ENCODE measurements at regions of chr22 and their contacts with region 1.

Region 1: GRCh38 chr22:50012716-50013181 is at the start of gene IL17REL:
- DNase-seq: no peak
- ATAC-seq: no peak
- H3K4me3 Mint-ChIP-seq: peak within 1 kb of the TSS; percentile 71
- H3K27ac Mint-ChIP-seq: peak within 1 kb of the TSS; percentile 68
- H3K4me1 Mint-ChIP-seq: peaks cover 49% of the 10 kb centered on the region
- H3K27me3 Mint-ChIP-seq: no peaks in the 10 kb centered on the region
- CTCF ChIP-seq: no peak
- total RNA-seq, gene IL17REL: 0.15 and 0.31 TPM in 2 replicates

Region 2: DNA sequence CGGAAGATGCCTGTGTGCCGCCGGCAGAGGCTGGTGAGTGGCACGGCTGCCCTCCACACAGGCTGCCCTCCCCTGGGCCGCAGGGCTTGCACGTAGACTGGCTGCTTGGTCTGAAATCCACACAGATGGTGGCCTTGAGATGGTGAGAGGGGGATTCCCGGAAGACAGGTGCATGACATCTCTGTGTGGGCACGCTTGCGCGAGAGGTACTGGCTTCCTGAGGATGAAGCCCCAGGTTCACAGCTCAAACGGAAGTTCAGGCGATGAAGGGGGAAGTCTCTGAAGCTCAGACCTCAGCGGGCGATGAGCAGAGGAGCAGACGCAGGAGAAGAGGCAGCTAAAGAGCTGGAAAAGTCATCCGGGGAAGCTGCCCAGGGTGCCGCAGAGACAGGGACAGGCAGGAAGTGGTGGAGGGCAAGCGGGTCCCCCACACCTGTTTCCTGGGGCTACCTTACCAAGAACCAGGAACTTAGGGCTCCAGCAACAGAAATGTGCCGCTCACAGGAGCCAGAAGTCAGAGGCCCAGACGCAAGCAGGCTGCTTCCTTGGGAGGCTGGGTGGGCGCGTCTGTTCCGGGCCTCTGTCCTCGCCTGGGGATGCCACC is 87.1 kb before region 1 on chr22:
- CTCF ChIA-PET with region 1: interaction called, 3 read pairs
- POLR2A ChIA-PET with region 1: interaction called, 16 read pairs
- intact Hi-C with region 1: loop called (anchors 5 kb)
- DNase-seq: peak; percentile 75
- ATAC-seq: peak; percentile 76
- H3K4me3 Mint-ChIP-seq: peak overlapping the region; percentile 81
- H3K27ac Mint-ChIP-seq: peak overlapping the region; percentile 98
- H3K4me1 Mint-ChIP-seq: peaks cover 58% of the 10 kb centered on the region
- H3K27me3 Mint-ChIP-seq: no peaks in the 10 kb centered on the region
- CTCF ChIP-seq: no peak

Region 3: GRCh38 chr22:49970528-49971231 is 42.1 kb before region 1 on chr22:
- CTCF ChIA-PET with region 1: no interaction called
- POLR2A ChIA-PET with region 1: interaction called, 11 read pairs
- intact Hi-C with region 1: no loop called
- DNase-seq: peak; percentile 81
- ATAC-seq: peak; percentile 89
- H3K4me3 Mint-ChIP-seq: peak overlapping the region; percentile 80
- H3K27ac Mint-ChIP-seq: peak overlapping the region; percentile 85
- H3K4me1 Mint-ChIP-seq: peaks cover 38% of the 10 kb centered on the region
- H3K27me3 Mint-ChIP-seq: no peaks in the 10 kb centered on the region
- CTCF ChIP-seq: no peak

Region 4: DNA sequence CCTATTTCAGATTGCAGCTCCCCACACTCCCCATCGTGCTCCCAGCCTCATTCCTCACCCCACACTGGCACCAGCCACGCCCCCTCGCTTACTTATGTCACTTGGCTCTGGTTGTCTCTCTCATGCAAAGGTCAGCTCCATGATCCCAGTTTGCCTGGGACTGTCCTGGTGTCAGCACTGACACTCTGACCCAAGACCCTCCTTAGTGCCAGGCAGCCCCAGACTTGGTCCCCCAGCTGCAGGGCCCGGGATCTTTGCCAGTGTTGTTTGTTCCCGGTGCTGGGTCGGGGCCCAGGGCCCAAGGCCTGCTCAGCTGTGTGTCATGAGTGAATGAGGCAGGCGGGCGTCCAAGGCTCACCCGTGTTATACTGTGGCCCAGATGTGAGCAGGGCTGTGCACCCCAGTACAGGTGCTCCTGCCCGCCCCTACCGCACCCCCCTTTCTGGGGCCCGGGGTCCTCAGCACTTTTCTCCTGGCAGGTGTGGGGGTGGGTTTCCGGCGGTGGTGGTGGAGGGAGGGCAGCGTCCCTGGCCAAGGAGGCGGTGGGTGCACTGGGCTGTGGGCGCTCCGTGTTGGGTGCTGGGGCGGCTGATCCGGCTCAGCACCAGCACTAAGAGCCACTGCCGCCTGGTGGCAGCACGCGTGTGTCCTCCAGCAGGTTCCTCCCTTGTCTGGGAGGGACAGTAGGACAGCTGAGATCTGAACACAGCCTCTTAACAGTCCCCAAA is 19.7 kb before region 1 on chr22:
- CTCF ChIA-PET with region 1: interaction called, 3 read pairs
- POLR2A ChIA-PET with region 1: no interaction called
- intact Hi-C with region 1: loop called (anchors 2 kb)
- DNase-seq: peak; percentile 61
- ATAC-seq: peak; percentile 98
- H3K4me3 Mint-ChIP-seq: peak overlapping the region; percentile 41
- H3K27ac Mint-ChIP-seq: peak overlapping the region; percentile 54
- H3K4me1 Mint-ChIP-seq: peaks cover 13% of the 10 kb centered on the region
- H3K27me3 Mint-ChIP-seq: no peaks in the 10 kb centered on the region
- CTCF ChIP-seq: no peak

Region 5: GRCh38 chr22:50200461-50201190 is 187.9 kb after region 1 on chr22 and contains the start of gene SELENOO:
- CTCF ChIA-PET with region 1: no interaction called
- POLR2A ChIA-PET with region 1: no interaction called
- intact Hi-C with region 1: loop called (anchors 10 kb)
- DNase-seq: peak; percentile 88
- ATAC-seq: peak; percentile 93
- H3K4me3 Mint-ChIP-seq: peak within 1 kb of the TSS; percentile 85
- H3K27ac Mint-ChIP-seq: peak within 1 kb of the TSS; percentile 35
- H3K4me1 Mint-ChIP-seq: peaks cover 26% of the 10 kb centered on the region
- H3K27me3 Mint-ChIP-seq: no peaks in the 10 kb centered on the region
- CTCF ChIP-seq: no peak
- total RNA-seq, gene SELENOO: 33.9 and 39.0 TPM in 2 replicates

Region 6: GRCh38 chr22:50517495-50518260 is 504.9 kb after region 1 on chr22:
- CTCF ChIA-PET with region 1: no interaction called
- POLR2A ChIA-PET with region 1: no interaction called
- intact Hi-C with region 1: no loop called
- DNase-seq: no peak
- ATAC-seq: no peak
- H3K4me3 Mint-ChIP-seq: no peak overlapping the region
- H3K27ac Mint-ChIP-seq: no peak overlapping the region
- H3K4me1 Mint-ChIP-seq: peaks cover 3% of the 10 kb centered on the region
- H3K27me3 Mint-ChIP-seq: no peaks in the 10 kb centered on the region
- CTCF ChIP-seq: no peak

Measured in activated B cell treated with CpG ODN at 0.5 μM for 24 hours (primary cell).